K562 (cell line): ENCODE measurements at regions of chr17 and their contacts with region 1.

Region 1: DNA sequence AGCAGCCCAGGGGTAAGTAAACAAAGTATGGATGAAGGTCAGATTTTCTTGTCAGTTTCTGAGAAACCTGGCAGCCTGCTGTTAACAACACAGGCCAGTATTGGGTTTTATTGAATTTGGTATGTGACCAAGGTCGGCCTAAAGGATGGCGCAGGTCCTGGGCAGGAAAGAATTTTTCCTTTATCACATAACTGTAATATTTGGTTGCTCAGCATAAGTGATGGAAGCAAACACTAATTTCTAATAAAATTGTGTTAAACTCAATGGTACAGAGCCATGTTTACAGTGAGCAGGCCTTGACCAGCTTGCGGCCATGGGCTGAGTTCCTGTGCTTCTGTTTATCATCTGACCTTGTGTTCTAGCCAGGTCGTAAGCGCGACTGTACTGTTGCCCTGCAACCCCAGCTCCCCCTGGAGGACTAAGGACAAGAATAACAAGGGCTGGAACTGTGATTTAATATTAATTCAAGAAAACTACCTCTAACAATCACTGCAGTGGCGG is 10.5 kb downstream of the POLDIP2 start:
- DNase-seq: peak; percentile 32 to 57 (median 40)
- ATAC-seq: peak; percentile 73
- H3K4me3 ChIP-seq: no peak overlapping the region
- H3K27ac ChIP-seq: no peak overlapping the region
- H3K4me1 ChIP-seq: peaks cover 0 to 3% of the 10 kb centered on the region in 2 experiments; a peak in 1 of 5 replicates
- H3K27me3 ChIP-seq: no peaks in the 10 kb centered on the region
- CTCF ChIP-seq: peak; percentile 59 to 70 (median 65)
- EP300 ChIP-seq: no peak
- POLR2A ChIP-seq: no peak
- RAD21 ChIP-seq: peak; percentile 37 to 69

Region 2: DNA sequence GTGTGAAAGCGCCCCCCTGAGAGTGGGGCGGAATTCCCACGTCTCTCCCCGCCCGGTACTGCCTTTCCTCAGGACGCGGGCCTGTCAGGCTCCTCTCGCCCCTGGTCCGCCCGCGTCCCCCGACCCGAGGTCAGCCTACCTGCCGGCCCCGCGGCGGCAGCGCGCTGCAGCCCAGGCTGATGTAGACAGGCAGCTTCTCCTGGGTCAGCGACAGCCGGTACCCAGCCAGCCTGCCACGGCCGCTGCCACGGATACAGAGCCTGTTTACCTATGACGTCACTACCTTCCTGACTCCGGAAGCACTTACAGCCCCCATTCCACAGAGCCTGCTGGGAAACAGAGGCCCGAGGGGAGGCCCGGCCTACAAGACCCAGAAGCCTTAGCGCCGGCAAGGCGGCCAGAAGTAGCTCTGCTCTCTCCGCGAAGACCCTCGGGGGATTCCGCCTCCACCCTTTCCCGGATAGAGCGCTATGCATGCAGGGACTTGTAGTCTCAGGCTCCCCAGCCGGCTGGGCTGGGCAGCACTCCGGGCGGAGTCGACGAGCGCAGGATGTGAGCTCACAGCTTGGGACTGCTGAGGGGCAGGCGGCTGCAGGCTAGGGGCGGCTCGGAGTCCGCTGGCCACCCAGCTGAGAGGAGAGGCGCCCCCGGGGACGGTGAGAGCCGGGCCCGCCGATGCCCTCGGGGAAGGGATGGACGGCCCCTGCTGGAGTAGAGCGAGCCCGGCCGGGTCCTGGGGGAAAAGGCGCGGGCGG is 11.4 kb before region 1 on chr17 and contains the starts of genes IFT20 and TNFAIP1:
- CTCF ChIA-PET with region 1: no interaction called
- POLR2A ChIA-PET with region 1: interaction called, 44 read pairs
- in situ Hi-C with region 1: no loop called
- intact Hi-C with region 1: no loop called
- DNase-seq: peak; percentile 91 to 99 (median 94)
- ATAC-seq: peak; percentile 98
- H3K4me3 ChIP-seq: peak within 1 kb of the TSS; percentile 95
- H3K27ac ChIP-seq: peak within 1 kb of the TSS; percentile 65
- H3K4me1 ChIP-seq: peaks cover 19 to 20% of the 10 kb centered on the region in 2 experiments; a peak in 4 of 5 replicates
- H3K27me3 ChIP-seq: no peaks in the 10 kb centered on the region
- CTCF ChIP-seq: no peak
- EP300 ChIP-seq: peak; percentile 32; the same call in 1 of the 2 replicates
- POLR2A ChIP-seq: peak; percentile 79
- RAD21 ChIP-seq: peak in 1 of 2 experiments; percentile 16; a peak in 1 of 4 replicates
- polyA plus RNA-seq, gene IFT20: 11.2 to 17.7 TPM
- polyA plus RNA-seq, gene TNFAIP1: 2.1 to 2.9 TPM